ENCODE measurements at regions of chr10 and their contacts with region 1.

Region 1: DNA sequence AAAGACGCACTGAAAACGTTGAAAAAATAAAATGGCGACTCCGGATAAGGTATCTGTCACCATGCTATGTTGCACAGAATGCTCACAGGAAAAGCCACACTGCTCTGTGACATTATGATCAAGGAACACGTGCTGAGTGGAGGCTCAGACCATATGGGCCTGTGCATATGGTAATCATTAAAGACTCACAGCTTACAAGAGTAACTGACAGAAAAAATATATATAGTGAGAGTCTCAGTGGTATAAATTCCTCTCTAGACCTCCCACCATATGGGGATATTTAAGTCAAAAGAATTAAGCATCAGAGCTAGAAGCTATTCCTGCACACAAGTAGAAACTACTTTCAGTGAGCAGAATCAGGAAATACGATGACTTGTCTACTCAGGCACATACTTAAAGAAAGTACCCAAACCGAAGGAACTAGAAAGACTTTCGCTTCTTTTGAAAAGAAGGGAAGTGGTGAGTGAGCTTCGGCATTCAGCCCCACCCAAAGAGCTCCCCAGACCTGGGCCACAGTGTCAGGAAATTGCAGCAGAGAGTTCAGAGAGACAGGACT is 65.1 kb upstream of the MPP7 start:
- DNase-seq: peak; percentile 82
- ATAC-seq: peak; percentile 98
- H3K4me3 Mint-ChIP-seq: peak overlapping the region; percentile 43
- H3K27ac Mint-ChIP-seq: peak overlapping the region; percentile 85
- H3K4me1 Mint-ChIP-seq: peaks cover 34% of the 10 kb centered on the region
- H3K27me3 Mint-ChIP-seq: peaks cover 8% of the 10 kb centered on the region

Region 2: GRCh38 chr10:28334296-28334695 is 33.7 kb before region 1 on chr10:
- CTCF ChIA-PET with region 1: interaction called, 29 read pairs
- DNase-seq: peak; percentile 80
- ATAC-seq: peak; percentile 69
- H3K4me3 Mint-ChIP-seq: peak overlapping the region; percentile 82
- H3K27ac Mint-ChIP-seq: peak overlapping the region; percentile 99
- H3K4me1 Mint-ChIP-seq: peaks cover 57% of the 10 kb centered on the region
- H3K27me3 Mint-ChIP-seq: peaks cover 10% of the 10 kb centered on the region

Region 3: DNA sequence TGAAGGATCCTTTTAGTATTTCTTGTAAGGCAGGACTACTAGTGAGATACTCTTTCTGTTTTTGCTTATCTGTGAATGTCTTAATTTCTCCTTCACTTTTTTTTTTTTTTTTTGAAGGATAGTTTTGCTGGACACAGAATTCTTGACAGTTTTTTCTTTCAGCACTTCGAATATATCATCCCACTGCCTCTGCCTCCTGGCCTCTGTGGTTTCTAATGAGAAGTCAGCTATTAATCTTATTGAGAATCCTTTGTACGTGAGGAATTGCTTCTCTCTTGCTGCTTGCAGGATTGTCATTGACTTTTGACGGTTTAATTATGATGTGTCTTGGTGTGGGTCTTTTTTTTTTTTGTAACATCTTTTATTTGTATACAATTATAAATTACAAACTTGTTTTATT is 152.3 kb after region 1 on chr10:
- CTCF ChIA-PET with region 1: no interaction called
- DNase-seq: no peak
- ATAC-seq: no peak
- H3K4me3 Mint-ChIP-seq: no peak overlapping the region
- H3K27ac Mint-ChIP-seq: no peak overlapping the region
- H3K4me1 Mint-ChIP-seq: no peaks in the 10 kb centered on the region
- H3K27me3 Mint-ChIP-seq: peaks cover 9% of the 10 kb centered on the region